CD4-positive, alpha-beta memory T cell (primary cell): ENCODE measurements at regions of chr16 and their contacts with region 1.

Region 1: GRCh38 chr16:50681021-50681885 is at the start of gene SNX20:
- DNase-seq: peak; percentile 69 to 82 (median 76)
- H3K4me3 ChIP-seq: peak within 1 kb of the TSS; percentile 45 to 93
- H3K4me3 Mint-ChIP-seq: peak within 1 kb of the TSS; percentile 83 to 97 (median 94)
- H3K27ac ChIP-seq: peak within 1 kb of the TSS; percentile 90
- H3K27ac Mint-ChIP-seq: peak within 1 kb of the TSS; percentile 87 to 99 (median 97)
- H3K4me1 ChIP-seq: peaks cover 93% of the 10 kb centered on the region
- H3K4me1 Mint-ChIP-seq: peaks cover 69 to 95% (median 84%) of the 10 kb centered on the region in 4 donors
- H3K27me3 ChIP-seq: no peaks in the 10 kb centered on the region
- H3K27me3 Mint-ChIP-seq: no peaks in the 10 kb centered on the region
- total RNA-seq, gene SNX20: 88.9 to 90.1 TPM

Region 2: DNA sequence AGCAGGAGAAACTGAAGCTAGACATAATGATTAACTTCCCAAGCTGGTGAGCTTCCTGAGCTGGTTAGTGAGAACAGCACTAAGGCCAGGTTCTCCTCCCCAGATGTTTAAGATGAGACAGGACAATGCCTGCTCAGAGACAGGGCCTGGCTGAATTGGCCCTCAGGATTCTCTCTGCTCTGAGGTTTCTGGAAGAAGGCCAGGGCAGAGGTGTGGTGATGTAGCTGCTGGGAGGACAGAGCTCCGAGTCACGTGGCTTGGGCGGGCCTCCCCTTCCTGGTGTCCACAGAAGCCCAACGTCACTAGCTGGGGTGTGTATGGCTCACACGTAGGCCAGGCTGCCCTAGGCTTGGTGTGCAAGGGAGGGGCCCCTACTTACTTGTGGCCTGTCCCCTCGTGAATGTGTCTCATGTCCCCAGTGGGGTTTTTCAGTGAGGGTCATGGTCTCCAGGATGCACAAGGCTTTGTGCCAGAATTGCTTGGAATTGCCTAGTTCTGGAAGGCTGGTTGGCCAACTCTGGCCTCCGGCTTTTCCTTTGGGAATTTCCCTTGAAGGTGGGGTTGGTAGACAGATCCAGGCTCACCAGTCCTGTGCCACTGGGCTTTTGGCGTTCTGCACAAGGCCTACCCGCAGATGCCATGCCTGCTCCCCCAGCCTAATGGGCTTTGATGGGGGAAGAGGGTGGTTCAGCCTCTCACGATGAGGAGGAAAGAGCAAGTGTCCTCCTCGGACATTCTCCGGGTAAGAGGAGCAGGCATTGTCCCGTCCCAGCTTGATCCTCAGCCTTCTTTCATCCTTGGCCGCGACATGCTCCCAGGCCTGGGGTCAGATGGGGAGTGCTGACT is 15.5 kb after region 1 on chr16:
- CTCF ChIA-PET with region 1: interaction called, 15 read pairs
- POLR2A ChIA-PET with region 1: interaction called, 226 read pairs
- intact Hi-C with region 1: loop called (anchors 1 kb)
- DNase-seq: peak; percentile 67 to 90 (median 71)
- H3K4me3 ChIP-seq: peak overlapping the region; percentile 48 to 89
- H3K4me3 Mint-ChIP-seq: peak overlapping the region; percentile 87 to 96 (median 93)
- H3K27ac ChIP-seq: peak overlapping the region; percentile 88
- H3K27ac Mint-ChIP-seq: peak overlapping the region; percentile 85 to 99 (median 95)
- H3K4me1 ChIP-seq: peaks cover 79% of the 10 kb centered on the region
- H3K4me1 Mint-ChIP-seq: peaks cover 60 to 93% (median 81%) of the 10 kb centered on the region in 4 donors
- H3K27me3 ChIP-seq: no peaks in the 10 kb centered on the region
- H3K27me3 Mint-ChIP-seq: no peaks in the 10 kb centered on the region

Region 3: GRCh38 chr16:50702725-50703124 is 21.5 kb after region 1 on chr16:
- CTCF ChIA-PET with region 1: interaction called, 15 read pairs
- POLR2A ChIA-PET with region 1: interaction called, 226 read pairs
- intact Hi-C with region 1: no loop called
- DNase-seq: no peak
- H3K4me3 ChIP-seq: no peak overlapping the region
- H3K4me3 Mint-ChIP-seq: peak overlapping the region in 1 of 8 donors; percentile 60
- H3K27ac ChIP-seq: no peak overlapping the region
- H3K27ac Mint-ChIP-seq: peak overlapping the region in 5 of 7 donors; percentile 19 to 57 (median 32)
- H3K4me1 ChIP-seq: peaks cover 43% of the 10 kb centered on the region
- H3K4me1 Mint-ChIP-seq: peaks cover 35 to 81% (median 66%) of the 10 kb centered on the region in 4 donors
- H3K27me3 ChIP-seq: no peaks in the 10 kb centered on the region
- H3K27me3 Mint-ChIP-seq: no peaks in the 10 kb centered on the region

Region 4: GRCh38 chr16:50719518-50720337 is 38.5 kb after region 1 on chr16:
- CTCF ChIA-PET with region 1: interaction called, 12 read pairs
- POLR2A ChIA-PET with region 1: interaction called, 6 read pairs
- intact Hi-C with region 1: no loop called
- DNase-seq: no peak
- H3K4me3 ChIP-seq: no peak overlapping the region
- H3K4me3 Mint-ChIP-seq: no peak overlapping the region
- H3K27ac ChIP-seq: no peak overlapping the region
- H3K27ac Mint-ChIP-seq: peak overlapping the region in 3 of 7 donors; percentile 46 to 74 (median 68)
- H3K4me1 ChIP-seq: peaks cover 12% of the 10 kb centered on the region
- H3K4me1 Mint-ChIP-seq: peaks cover 12 to 35% (median 23%) of the 10 kb centered on the region in 4 donors
- H3K27me3 ChIP-seq: no peaks in the 10 kb centered on the region
- H3K27me3 Mint-ChIP-seq: no peaks in the 10 kb centered on the region